ENCODE measurements at regions of chr21 and their contacts with region 1.

Region 1: DNA sequence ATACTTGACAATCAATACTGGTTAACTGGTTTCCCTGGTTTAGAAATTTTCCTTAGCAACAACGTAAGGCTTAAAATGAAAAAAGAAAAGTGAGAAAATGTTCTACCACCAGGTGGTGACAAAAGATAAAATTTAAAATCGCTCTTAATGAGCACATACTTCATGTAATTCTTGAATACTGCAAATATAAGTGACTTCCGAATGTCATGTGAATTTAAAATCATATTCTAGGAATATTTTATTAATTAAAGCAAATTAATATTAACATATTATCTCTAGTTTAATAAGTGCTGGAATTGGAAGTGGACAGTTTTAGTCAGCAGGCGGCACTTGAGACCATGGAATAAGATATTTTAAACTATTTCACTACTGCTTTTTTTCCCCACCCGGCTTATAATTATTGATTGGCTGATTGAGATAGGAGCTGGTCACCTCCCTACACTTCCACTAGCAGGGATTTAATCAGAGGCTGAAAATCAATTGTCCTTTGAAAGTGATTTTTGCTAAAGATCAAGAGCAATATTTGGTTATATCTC is 5.0 kb upstream of the ADAMTS1 start:
- DNase-seq: peak; percentile 60
- H3K4me3 ChIP-seq: peak overlapping the region; percentile 62
- H3K27ac ChIP-seq: 0 out of 2 replicates have a peak overlapping the region, but pooled peaks have one; percentile 6
- H3K4me1 ChIP-seq: peaks cover 7% of the 10 kb centered on the region
- H3K27me3 ChIP-seq: no peaks in the 10 kb centered on the region

Region 2: DNA sequence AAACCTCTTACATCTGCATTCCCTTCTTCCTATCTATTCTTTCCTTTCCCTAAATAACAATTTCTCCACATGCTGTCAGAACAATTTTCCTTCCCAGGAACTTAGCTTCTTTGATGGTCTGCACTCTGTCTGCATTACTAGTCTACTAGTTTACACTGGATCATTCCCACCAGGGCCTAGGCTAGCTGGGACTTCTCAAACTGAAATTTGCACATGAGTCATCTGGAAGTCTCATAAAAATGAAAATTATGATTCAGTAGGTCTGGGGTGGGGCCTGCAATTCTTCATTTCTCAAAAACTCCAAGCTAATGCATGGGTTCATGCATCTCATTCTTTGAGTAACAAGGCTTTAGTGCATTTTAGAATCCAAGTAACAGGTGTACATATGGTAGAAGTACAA is 1041.2 kb before region 1 on chr21:
- in situ Hi-C with region 1: no loop called
- DNase-seq: peak; percentile 36
- H3K4me3 ChIP-seq: no peak overlapping the region
- H3K27ac ChIP-seq: no peak overlapping the region
- H3K4me1 ChIP-seq: no peaks in the 10 kb centered on the region
- H3K27me3 ChIP-seq: no peaks in the 10 kb centered on the region

Region 3: GRCh38 chr21:25967573-25968438 is 882.4 kb before region 1 on chr21:
- in situ Hi-C with region 1: no loop called
- DNase-seq: no peak
- H3K4me3 ChIP-seq: no peak overlapping the region
- H3K27ac ChIP-seq: no peak overlapping the region
- H3K4me1 ChIP-seq: 0 out of 2 replicates have a peak, but pooled peaks cover 3% of the 10 kb centered on the region
- H3K27me3 ChIP-seq: no peaks in the 10 kb centered on the region

Region 4: DNA sequence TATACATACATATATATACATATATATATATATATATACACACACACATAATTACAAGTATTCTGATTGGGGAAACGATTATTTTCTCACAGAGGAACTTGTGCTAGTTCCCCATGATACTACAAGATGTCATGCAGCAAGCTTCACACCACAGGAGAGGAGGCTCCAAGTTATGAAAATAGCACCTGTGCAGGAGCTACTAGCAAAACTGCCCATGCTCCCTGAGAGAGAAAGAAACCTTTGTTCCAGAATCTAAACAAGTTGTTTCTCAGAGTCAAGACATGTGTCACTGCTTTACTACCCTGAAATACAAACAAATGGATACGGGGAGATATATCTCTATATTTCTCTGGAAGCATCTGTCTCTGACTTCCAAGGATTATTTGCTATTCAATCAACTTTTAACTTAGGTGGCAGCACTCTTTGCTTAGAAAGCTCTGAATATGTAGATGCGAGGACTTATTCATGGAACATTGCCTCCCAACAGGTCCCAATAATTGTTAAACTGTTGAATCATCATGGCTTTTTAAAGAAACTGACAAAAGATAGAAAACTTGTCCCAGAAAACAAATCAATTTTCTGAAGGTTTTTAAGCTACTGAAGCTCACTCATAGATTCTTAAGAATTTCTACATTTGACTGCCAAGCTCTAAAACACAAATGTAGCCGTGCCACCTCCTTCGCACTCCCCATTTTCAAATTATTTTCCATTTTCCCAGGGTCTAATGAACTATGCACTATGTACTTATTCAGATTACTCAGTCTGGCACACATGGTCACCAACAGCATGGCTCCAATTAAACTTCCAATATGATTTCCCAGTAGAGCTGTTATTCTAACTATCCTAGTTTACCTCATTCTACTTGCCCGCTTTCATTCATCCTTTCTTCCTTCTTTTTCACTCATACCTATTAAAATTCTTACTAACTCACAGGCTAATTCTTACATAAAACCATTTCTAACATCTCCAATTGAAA is 1213.4 kb after region 1 on chr21:
- in situ Hi-C with region 1: loop called (anchors 10 kb)
- DNase-seq: no peak
- H3K4me3 ChIP-seq: no peak overlapping the region
- H3K27ac ChIP-seq: no peak overlapping the region
- H3K4me1 ChIP-seq: peaks cover 16% of the 10 kb centered on the region
- H3K27me3 ChIP-seq: no peaks in the 10 kb centered on the region

Region 5: GRCh38 chr21:28336314-28336713 is 1486.1 kb after region 1 on chr21:
- in situ Hi-C with region 1: loop called (anchors 10 kb)
- DNase-seq: peak; percentile 87
- H3K4me3 ChIP-seq: peak overlapping the region; percentile 28; the same call in 1 of the 2 replicates
- H3K27ac ChIP-seq: peak overlapping the region; percentile 56
- H3K4me1 ChIP-seq: peaks cover 54% of the 10 kb centered on the region
- H3K27me3 ChIP-seq: no peaks in the 10 kb centered on the region

Measured in GM23248 (cell line).